Caco-2 (cell line): ENCODE measurements at regions of chr14 and their contacts with region 1.

Region 1: DNA sequence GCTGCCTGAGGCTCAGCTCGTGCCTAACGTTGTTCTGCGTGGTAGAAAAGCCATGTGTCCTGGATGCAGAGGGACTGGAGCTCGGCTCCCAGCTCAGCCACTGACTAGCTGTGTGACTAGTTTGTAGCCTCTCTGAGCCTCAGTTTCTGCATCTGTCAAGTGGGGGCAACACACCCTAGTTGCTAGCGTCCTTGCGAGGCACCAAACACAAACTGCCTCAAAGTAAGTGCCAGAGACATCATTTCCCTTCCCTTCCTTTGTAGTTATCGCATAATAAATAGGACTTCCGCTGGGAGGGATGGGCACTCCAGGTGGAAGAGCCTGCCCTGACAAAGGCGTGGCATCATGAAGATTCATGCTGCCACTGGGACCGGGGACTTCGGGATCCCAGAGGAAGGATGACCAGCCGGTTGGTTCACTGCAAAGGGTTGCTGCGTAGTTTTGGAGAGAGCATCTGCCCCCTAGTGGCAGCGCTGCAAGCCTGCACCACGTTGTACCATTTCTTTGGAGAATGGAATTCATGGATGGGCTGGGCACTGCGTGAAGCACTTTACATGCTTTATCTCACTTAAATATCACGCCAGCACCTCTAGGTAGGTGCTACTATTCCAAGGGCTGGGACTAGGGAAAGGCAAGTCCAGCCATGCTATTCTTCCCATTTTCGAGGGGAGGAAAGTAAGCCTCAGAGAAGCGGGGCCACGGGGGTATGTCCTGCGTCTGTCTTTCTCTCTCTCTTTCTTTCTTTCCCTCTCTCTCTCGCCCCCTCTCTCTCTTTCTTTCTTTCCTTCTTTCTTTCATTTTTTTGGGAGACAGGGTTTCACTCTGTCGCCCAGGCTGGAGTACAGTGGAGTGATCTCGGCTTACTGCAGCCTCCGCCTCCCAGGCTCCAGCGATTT is 4.6 kb downstream of the CCDC197 start:
- DNase-seq: peak; percentile 62
- H3K4me3 ChIP-seq: no peak overlapping the region
- H3K4me3 Mint-ChIP-seq: no peak overlapping the region
- H3K27ac Mint-ChIP-seq: no peak overlapping the region
- H3K4me1 ChIP-seq: peaks cover 14% of the 10 kb centered on the region
- H3K4me1 Mint-ChIP-seq: peaks cover 22% of the 10 kb centered on the region
- H3K27me3 ChIP-seq: no peaks in the 10 kb centered on the region
- H3K27me3 Mint-ChIP-seq: no peaks in the 10 kb centered on the region
- CTCF ChIP-seq: peak; percentile 91 to 94

Region 2: GRCh38 chr14:93591506-93591905 is 410.2 kb before region 1 on chr14:
- CTCF ChIA-PET with region 1: no interaction called
- POLR2A ChIA-PET with region 1: no interaction called
- intact Hi-C with region 1: no loop called
- DNase-seq: no peak
- H3K4me3 ChIP-seq: no peak overlapping the region
- H3K4me3 Mint-ChIP-seq: no peak overlapping the region
- H3K27ac Mint-ChIP-seq: no peak overlapping the region
- H3K4me1 ChIP-seq: no peaks in the 10 kb centered on the region
- H3K4me1 Mint-ChIP-seq: no peaks in the 10 kb centered on the region
- H3K27me3 ChIP-seq: no peaks in the 10 kb centered on the region
- H3K27me3 Mint-ChIP-seq: peaks cover 17% of the 10 kb centered on the region
- CTCF ChIP-seq: no peak

Region 3: GRCh38 chr14:93939304-93940229 is 62.2 kb before region 1 on chr14:
- CTCF ChIA-PET with region 1: interaction called, 3 read pairs
- POLR2A ChIA-PET with region 1: no interaction called
- intact Hi-C with region 1: loop called (anchors 5 kb)
- DNase-seq: peak in 1 of 2 experiments; percentile 57
- H3K4me3 ChIP-seq: no peak overlapping the region
- H3K4me3 Mint-ChIP-seq: no peak overlapping the region
- H3K27ac Mint-ChIP-seq: no peak overlapping the region
- H3K4me1 ChIP-seq: no peaks in the 10 kb centered on the region
- H3K4me1 Mint-ChIP-seq: no peaks in the 10 kb centered on the region
- H3K27me3 ChIP-seq: no peaks in the 10 kb centered on the region
- H3K27me3 Mint-ChIP-seq: no peaks in the 10 kb centered on the region
- CTCF ChIP-seq: peak in 1 of 2 experiments; percentile 48

Region 4: DNA sequence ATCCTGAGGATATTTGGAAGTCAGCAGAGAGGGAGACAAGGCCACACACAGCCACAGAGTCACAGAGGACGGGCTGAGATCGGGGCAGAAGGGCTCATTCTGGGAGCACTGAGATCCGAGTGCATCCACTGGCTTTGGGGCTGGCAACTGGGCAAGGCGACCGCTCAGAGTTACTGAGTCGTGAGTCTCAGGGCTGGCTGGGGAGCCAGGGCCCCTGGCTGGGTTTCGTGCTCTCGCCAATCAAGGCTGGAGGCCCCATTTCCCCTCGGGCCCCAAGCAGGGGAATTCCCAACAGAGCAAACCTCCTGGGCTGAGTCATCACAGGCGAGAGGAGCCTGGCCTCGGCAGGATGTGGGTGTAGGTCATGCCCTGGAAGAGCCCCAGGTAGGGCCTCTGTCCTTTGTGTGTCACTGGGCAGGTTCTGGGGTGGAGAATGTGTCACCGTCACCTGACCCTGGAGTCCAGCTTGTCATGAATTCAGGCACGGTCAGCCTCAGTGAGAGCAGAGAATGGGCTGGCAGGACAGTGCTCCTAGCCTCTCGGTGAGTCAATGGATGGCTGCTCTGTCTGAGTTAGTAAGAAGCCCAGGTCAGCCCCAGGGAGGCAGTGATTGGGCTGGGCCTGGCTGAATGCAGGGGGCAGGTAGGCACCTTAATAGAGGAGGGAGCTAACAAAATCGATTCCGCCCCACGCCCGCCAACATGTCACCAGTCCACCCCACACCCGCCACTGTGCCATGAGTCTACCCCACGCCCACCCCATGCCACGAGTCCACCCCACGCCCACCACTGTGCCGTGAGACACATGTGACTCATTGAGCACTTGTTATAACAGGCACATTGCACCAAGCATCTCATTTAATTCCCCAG is 42.3 kb before region 1 on chr14:
- CTCF ChIA-PET with region 1: no interaction called
- POLR2A ChIA-PET with region 1: no interaction called
- intact Hi-C with region 1: loop called (anchors 5 kb)
- DNase-seq: peak; percentile 90 to 96
- H3K4me3 ChIP-seq: no peak overlapping the region
- H3K4me3 Mint-ChIP-seq: peak overlapping the region; percentile 45
- H3K27ac Mint-ChIP-seq: peak overlapping the region; percentile 98
- H3K4me1 ChIP-seq: peaks cover 39% of the 10 kb centered on the region
- H3K4me1 Mint-ChIP-seq: peaks cover 14% of the 10 kb centered on the region
- H3K27me3 ChIP-seq: no peaks in the 10 kb centered on the region
- H3K27me3 Mint-ChIP-seq: no peaks in the 10 kb centered on the region
- CTCF ChIP-seq: no peak

Region 5: DNA sequence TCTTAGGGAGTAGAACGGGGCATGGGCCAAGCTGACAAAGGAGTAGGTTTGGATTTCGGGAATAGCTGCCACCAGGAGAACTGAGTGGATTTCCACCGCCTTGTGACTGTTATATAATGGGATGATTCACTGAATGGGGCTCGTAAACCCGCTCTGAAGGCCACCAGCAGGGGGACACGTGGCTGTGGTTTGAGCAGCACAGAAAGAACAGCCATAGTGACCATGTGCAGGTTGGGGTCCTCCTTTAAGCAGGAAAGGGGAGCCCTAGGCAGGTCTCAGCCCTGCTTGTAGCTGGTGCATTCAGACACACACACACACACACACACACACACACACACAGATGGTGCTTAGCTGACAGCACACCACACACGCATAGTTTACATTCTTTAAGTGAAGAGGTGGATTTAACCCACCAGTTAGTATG is 16.8 kb before region 1 on chr14:
- CTCF ChIA-PET with region 1: interaction called, 4 read pairs
- POLR2A ChIA-PET with region 1: no interaction called
- intact Hi-C with region 1: loop called (anchors 1 kb)
- DNase-seq: peak; percentile 67
- H3K4me3 ChIP-seq: no peak overlapping the region
- H3K4me3 Mint-ChIP-seq: no peak overlapping the region
- H3K27ac Mint-ChIP-seq: no peak overlapping the region
- H3K4me1 ChIP-seq: peaks cover 9% of the 10 kb centered on the region
- H3K4me1 Mint-ChIP-seq: no peaks in the 10 kb centered on the region
- H3K27me3 ChIP-seq: no peaks in the 10 kb centered on the region
- H3K27me3 Mint-ChIP-seq: no peaks in the 10 kb centered on the region
- CTCF ChIP-seq: peak; percentile 37 to 47

Region 6: DNA sequence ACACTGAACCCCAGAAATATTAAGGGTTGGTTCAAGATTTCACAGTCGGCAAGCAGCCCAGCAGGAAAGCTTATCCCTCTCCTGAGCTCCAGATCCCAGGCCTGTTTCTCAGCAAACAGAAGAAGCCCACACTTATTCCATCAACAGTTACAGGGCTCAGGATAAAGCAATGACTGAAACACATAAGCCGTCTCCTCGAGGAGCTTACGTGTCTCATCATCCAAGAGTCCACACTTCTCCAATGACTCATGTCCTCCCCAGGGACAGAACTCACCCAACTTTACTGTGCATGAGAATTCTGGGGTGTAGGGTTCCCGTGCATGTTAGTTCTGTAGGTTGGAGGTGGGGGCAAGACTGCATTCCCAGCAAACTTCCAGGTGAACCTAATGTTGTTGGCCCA is 737.0 kb after region 1 on chr14:
- CTCF ChIA-PET with region 1: no interaction called
- POLR2A ChIA-PET with region 1: no interaction called
- intact Hi-C with region 1: no loop called
- DNase-seq: no peak
- H3K4me3 ChIP-seq: no peak overlapping the region
- H3K4me3 Mint-ChIP-seq: no peak overlapping the region
- H3K27ac Mint-ChIP-seq: no peak overlapping the region
- H3K4me1 ChIP-seq: no peaks in the 10 kb centered on the region
- H3K4me1 Mint-ChIP-seq: no peaks in the 10 kb centered on the region
- H3K27me3 ChIP-seq: no peaks in the 10 kb centered on the region
- H3K27me3 Mint-ChIP-seq: no peaks in the 10 kb centered on the region
- CTCF ChIP-seq: no peak